SK-N-SH (cell line): ENCODE measurements at regions of chr7 and their contacts with region 1.

Region 1: DNA sequence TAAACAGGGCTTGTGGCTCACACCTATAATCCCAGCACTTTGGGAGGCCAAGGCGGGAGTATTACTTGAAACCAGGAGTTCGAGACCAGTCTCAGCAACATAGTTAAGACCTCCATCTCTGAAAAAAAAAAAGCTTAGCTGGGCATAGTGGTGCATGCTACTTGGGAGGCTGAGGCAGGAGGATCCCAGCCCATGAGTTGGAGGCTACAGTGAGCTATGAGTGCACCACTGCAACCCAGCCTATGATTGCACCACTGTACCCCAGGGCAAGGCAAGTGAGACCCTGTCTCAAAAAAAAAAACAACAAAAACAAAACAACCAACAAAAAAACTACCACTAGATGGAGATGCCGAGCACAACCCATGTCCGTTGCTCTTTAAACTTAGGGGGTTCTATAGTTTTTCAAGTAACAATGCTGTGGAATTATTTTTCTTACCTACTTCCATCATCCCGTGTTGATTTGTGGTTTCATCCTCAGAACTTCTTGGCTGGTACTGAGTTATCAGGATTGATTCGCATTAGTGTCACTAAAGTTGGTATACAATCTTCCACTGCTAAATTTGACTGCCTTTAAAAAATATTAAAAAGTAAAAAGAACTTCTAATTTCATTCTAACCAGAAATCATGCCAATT is 12.2 kb upstream of the REPIN1 start:
- DNase-seq: peak; percentile 77
- H3K4me3 ChIP-seq: no peak overlapping the region
- H3K27ac ChIP-seq: no peak overlapping the region
- H3K4me1 ChIP-seq: no peaks in the 10 kb centered on the region
- H3K27me3 ChIP-seq: no peaks in the 10 kb centered on the region
- CTCF ChIP-seq: peak; percentile 95
- EP300 ChIP-seq: no peak
- RAD21 ChIP-seq: peak; percentile 80

Region 2: DNA sequence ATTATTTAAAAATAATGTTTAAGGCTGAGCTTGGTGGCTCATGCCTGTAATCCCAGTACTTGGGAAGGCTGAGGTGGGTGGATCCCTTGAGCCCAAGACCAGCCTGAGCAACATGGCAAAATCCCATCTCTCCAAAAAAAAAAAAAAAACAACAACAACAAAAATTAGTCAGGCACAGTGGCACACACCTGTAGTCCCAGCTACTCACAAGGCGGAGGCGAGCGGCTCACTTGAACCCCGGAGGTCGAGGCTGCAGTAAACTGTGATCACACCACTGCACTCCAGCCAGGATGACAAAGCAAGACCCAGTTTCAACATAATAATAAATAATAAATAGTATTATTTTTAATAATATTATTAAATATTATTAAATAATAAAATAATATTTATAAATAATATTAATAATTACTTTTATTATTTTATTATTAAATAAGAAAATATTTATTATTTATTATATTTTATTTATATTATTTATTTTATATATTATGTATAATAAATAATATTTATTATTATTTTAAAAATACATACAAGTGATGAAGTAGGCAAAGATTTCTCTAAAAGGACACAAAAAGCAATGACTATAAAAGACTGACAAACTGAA is 41.6 kb before region 1 on chr7:
- CTCF ChIA-PET with region 1: no interaction called
- POLR2A ChIA-PET with region 1: no interaction called
- DNase-seq: no peak
- H3K4me3 ChIP-seq: no peak overlapping the region
- H3K27ac ChIP-seq: no peak overlapping the region
- H3K4me1 ChIP-seq: no peaks in the 10 kb centered on the region
- H3K27me3 ChIP-seq: no peaks in the 10 kb centered on the region
- CTCF ChIP-seq: no peak
- EP300 ChIP-seq: no peak
- RAD21 ChIP-seq: no peak

Region 3: GRCh38 chr7:150345012-150345411 is 11.4 kb before region 1 on chr7:
- CTCF ChIA-PET with region 1: interaction called, 10 read pairs
- POLR2A ChIA-PET with region 1: no interaction called
- DNase-seq: no peak
- H3K4me3 ChIP-seq: no peak overlapping the region
- H3K27ac ChIP-seq: no peak overlapping the region
- H3K4me1 ChIP-seq: no peaks in the 10 kb centered on the region; a peak in 1 of 4 replicates
- H3K27me3 ChIP-seq: peaks cover 8% of the 10 kb centered on the region; the same call in 1 of the 2 replicates
- CTCF ChIP-seq: no peak
- EP300 ChIP-seq: no peak
- RAD21 ChIP-seq: no peak

Region 4: GRCh38 chr7:150368096-150368883 is 11.9 kb after region 1 on chr7 and contains the start of gene REPIN1:
- CTCF ChIA-PET with region 1: interaction called, 57 read pairs
- POLR2A ChIA-PET with region 1: no interaction called
- DNase-seq: peak; percentile 99
- H3K4me3 ChIP-seq: peak within 1 kb of the TSS; percentile 70 to 77
- H3K27ac ChIP-seq: peak within 1 kb of the TSS; percentile 72 to 96
- H3K4me1 ChIP-seq: peaks cover 19 to 32% of the 10 kb centered on the region in 2 experiments
- H3K27me3 ChIP-seq: no peaks in the 10 kb centered on the region
- CTCF ChIP-seq: no peak
- EP300 ChIP-seq: peak in 1 of 2 experiments; percentile 57; a peak in 3 of 4 replicates
- RAD21 ChIP-seq: peak; percentile 4; the same call in 1 of the 2 replicates
- polyA plus RNA-seq, gene REPIN1: 87.5 and 91.6 TPM in 2 replicates

Region 5: GRCh38 chr7:150420987-150421674 is 64.8 kb after region 1 on chr7:
- CTCF ChIA-PET with region 1: interaction called, 19 read pairs
- POLR2A ChIA-PET with region 1: no interaction called
- DNase-seq: peak; percentile 92
- H3K4me3 ChIP-seq: peak overlapping the region in 1 of 2 experiments; percentile 33; a peak in 1 of 4 replicates
- H3K27ac ChIP-seq: no peak overlapping the region
- H3K4me1 ChIP-seq: no peaks in the 10 kb centered on the region
- H3K27me3 ChIP-seq: no peaks in the 10 kb centered on the region
- CTCF ChIP-seq: peak; percentile 99
- EP300 ChIP-seq: no peak
- RAD21 ChIP-seq: peak; percentile 95